ENCODE measurements at regions of chr10 and their contacts with region 1.

Region 1: GRCh38 chr10:63268798-63269503 is 135.8 kb downstream of the NRBF2 start:
- H3K4me3 Mint-ChIP-seq: peak overlapping the region; percentile 88
- H3K27ac Mint-ChIP-seq: peak overlapping the region; percentile 96
- H3K4me1 Mint-ChIP-seq: peaks cover 19% of the 10 kb centered on the region
- H3K27me3 Mint-ChIP-seq: no peaks in the 10 kb centered on the region

Region 2: DNA sequence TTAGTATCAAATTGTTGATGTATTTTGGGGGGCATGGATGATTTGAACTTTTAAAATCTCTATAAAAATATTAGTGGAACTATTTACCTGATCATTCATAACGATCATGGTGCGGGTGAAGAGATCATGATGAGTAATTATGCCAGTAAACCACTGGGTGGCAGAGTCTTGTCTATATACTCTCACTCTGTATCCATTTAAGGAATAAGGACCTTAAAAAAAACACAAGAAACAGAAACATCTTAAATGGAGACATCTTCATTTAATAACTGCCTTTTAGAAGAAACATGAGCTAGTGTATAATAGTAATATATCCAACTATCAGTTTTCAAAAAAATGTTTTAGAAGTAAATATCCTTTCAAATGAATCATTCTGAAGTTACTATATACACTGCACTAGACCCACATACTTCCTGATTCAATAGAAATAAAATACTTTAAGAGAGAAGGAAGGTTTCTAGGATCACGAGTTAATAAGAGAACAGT is 51.8 kb before region 1 on chr10:
- intact Hi-C with region 1: loop called (anchors 5 kb)
- H3K4me3 Mint-ChIP-seq: no peak overlapping the region
- H3K27ac Mint-ChIP-seq: no peak overlapping the region
- H3K4me1 Mint-ChIP-seq: peaks cover 47% of the 10 kb centered on the region
- H3K27me3 Mint-ChIP-seq: no peaks in the 10 kb centered on the region

Region 3: DNA sequence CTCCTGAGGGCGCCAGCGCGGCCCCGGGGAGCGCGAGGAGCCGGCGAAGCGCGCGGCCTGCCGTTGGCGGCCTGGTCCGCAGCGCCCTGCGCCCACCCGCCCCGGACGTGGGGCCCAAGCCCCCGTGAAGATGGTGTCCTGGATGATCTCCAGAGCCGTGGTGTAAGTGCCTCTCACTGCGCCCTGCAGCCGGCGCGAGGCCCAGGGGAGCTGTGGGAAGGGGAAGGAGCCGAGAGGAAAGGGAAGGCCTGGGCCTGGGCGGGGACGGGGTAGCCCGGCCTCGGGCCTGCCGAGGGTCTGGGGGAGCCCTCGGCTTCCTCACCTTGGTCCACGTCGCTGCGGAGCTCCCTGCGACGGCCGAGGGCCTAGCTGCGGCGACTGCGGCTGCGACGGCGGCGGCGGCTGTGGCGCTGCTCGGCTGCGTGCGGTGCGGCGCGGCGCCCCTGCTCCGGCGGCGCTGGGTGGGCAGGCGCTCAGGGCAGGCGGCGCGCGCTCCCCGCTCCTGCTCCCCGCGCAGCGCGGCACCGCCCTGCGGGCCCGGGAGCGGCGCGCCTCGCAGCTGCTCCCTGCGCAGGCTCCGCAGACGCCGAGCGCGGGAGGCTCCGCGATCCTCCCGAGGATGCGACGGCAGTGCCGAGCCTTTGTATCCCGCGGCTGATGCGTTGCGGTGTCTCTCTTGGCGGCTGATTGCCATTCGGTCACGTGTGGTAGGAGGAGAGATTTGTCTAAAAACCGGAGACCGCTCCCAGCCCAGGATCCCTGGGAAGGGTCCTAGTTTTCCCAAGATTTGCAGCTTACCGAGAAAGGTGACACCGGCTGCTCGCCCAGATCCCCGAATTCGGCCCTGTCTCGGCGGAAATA is 252.7 kb after region 1 on chr10:
- intact Hi-C with region 1: loop called (anchors 5 kb)
- H3K4me3 Mint-ChIP-seq: peak overlapping the region; percentile 81
- H3K27ac Mint-ChIP-seq: peak overlapping the region; percentile 81
- H3K4me1 Mint-ChIP-seq: peaks cover 40% of the 10 kb centered on the region
- H3K27me3 Mint-ChIP-seq: no peaks in the 10 kb centered on the region

Region 4: GRCh38 chr10:63707254-63707910 is 438.4 kb after region 1 on chr10:
- intact Hi-C with region 1: loop called (anchors 10 kb)
- H3K4me3 Mint-ChIP-seq: no peak overlapping the region
- H3K27ac Mint-ChIP-seq: peak overlapping the region; percentile 27
- H3K4me1 Mint-ChIP-seq: peaks cover 40% of the 10 kb centered on the region
- H3K27me3 Mint-ChIP-seq: peaks cover 8% of the 10 kb centered on the region